T-cell (primary cell): ENCODE measurements at regions of chr1 and their contacts with region 1.

Region 1: GRCh38 chr1:9539165-9539828 is at the start of gene SLC25A33:
- DNase-seq: peak; percentile 82 to 98 (median 92)
- ATAC-seq: peak; percentile 97 to 99 (median 98)
- H3K4me3 ChIP-seq: peak within 1 kb of the TSS; percentile 52 to 61
- H3K4me3 Mint-ChIP-seq: peak within 1 kb of the TSS; percentile 85 to 89 (median 87)
- H3K27ac ChIP-seq: peak within 1 kb of the TSS; percentile 65
- H3K27ac Mint-ChIP-seq: peak within 1 kb of the TSS; percentile 69 to 83
- H3K4me1 ChIP-seq: peaks cover 5 to 20% of the 10 kb centered on the region in 2 experiments
- H3K4me1 Mint-ChIP-seq: peaks cover 31 to 35% (median 33%) of the 10 kb centered on the region in 3 donors
- H3K27me3 ChIP-seq: no peaks in the 10 kb centered on the region
- H3K27me3 Mint-ChIP-seq: no peaks in the 10 kb centered on the region
- total RNA-seq, gene SLC25A33: 2.8 to 6.2 (median 4.4) TPM

Region 2: GRCh38 chr1:9561429-9561828 is 22.1 kb after region 1 on chr1:
- CTCF ChIA-PET with region 1: no interaction called
- POLR2A ChIA-PET with region 1: interaction called, 3 to 16 read pairs
- DNase-seq: peak in 2 of 35 experiments; percentile 16 to 66
- ATAC-seq: peak in 1 of 4 experiments; percentile 39
- H3K4me3 ChIP-seq: no peak overlapping the region
- H3K4me3 Mint-ChIP-seq: no peak overlapping the region
- H3K27ac ChIP-seq: no peak overlapping the region
- H3K27ac Mint-ChIP-seq: peak overlapping the region; percentile 21 to 59
- H3K4me1 ChIP-seq: peaks cover 22 to 28% of the 10 kb centered on the region in 2 experiments
- H3K4me1 Mint-ChIP-seq: peaks cover 35 to 41% (median 37%) of the 10 kb centered on the region in 3 donors
- H3K27me3 ChIP-seq: no peaks in the 10 kb centered on the region
- H3K27me3 Mint-ChIP-seq: no peaks in the 10 kb centered on the region

Region 3: GRCh38 chr1:9676815-9677393 is 137.6 kb after region 1 on chr1:
- CTCF ChIA-PET with region 1: no interaction called
- POLR2A ChIA-PET with region 1: no interaction called
- DNase-seq: no peak
- ATAC-seq: no peak
- H3K4me3 ChIP-seq: no peak overlapping the region
- H3K4me3 Mint-ChIP-seq: peak overlapping the region in 1 of 3 donors; percentile 55
- H3K27ac ChIP-seq: peak overlapping the region; percentile 24
- H3K27ac Mint-ChIP-seq: peak overlapping the region; percentile 21 to 92
- H3K4me1 ChIP-seq: peaks cover 0 to 92% of the 10 kb centered on the region in 2 experiments
- H3K4me1 Mint-ChIP-seq: peaks cover 76 to 81% (median 77%) of the 10 kb centered on the region in 3 donors
- H3K27me3 ChIP-seq: no peaks in the 10 kb centered on the region
- H3K27me3 Mint-ChIP-seq: no peaks in the 10 kb centered on the region

Region 4: GRCh38 chr1:11019971-11020370 is 1480.7 kb after region 1 on chr1:
- CTCF ChIA-PET with region 1: no interaction called
- POLR2A ChIA-PET with region 1: interaction called in 1 of 2 experiments, 10 read pairs
- DNase-seq: no peak
- ATAC-seq: no peak
- H3K4me3 ChIP-seq: no peak overlapping the region
- H3K4me3 Mint-ChIP-seq: no peak overlapping the region
- H3K27ac ChIP-seq: no peak overlapping the region
- H3K27ac Mint-ChIP-seq: no peak overlapping the region
- H3K4me1 ChIP-seq: peaks cover 1 to 17% of the 10 kb centered on the region in 2 experiments
- H3K4me1 Mint-ChIP-seq: peaks cover 48 to 49% (median 49%) of the 10 kb centered on the region in 3 donors
- H3K27me3 ChIP-seq: no peaks in the 10 kb centered on the region
- H3K27me3 Mint-ChIP-seq: no peaks in the 10 kb centered on the region